Activated CD4-positive, alpha-beta T cell treated with anti-CD3 and anti-CD28 coated beads, Interleukin-2, amount 10 ng/mL, durations not matched to agents 24 days and 14 days (primary cell): ENCODE measurements at regions of chr16 and their contacts with region 1.

Region 1: DNA sequence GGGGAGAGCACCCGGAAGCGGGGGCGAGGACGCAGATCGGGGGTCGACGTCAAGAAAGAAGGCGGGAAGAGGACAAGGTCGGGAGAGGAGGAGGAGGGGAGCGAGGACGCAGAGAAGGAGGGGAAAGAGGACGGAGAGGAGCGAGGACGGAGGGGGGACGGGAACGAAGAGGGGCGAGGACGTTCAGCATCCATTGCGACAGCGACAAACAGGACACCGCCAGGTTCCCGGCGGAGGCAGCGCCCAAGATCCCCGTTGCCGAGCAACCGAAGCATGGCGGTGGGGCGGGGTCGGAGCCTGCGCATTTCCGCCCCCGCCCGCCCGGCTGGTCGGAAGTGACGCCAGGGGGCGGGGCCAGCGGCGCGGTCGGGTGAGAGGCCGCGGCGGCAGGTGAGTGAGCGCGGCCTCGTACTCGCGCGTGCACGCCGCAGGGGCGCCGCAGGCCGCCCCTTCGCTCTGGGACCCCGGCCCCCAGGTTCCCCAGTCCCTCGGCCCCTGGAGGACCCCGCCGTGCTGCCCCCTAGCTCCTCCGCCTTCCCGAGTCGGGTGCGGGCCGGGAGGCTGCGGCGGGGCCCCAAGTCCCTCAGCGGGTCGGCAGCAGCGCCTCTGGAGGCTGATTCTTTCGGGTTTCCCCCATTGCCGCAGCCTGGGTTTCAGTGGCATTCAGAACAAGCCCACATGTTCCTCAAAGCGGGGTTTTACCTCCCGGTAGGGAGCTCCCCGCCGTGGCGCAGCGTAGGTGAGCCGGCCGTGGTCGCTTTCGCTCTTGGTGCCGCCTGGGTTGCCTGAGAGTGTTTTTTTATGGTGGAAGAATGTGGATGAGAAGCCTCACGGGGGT is at the start of gene FAM234A:
- DNase-seq: peak; percentile 98
- H3K4me3 Mint-ChIP-seq: peak within 1 kb of the TSS; percentile 99
- H3K27ac Mint-ChIP-seq: peak within 1 kb of the TSS; percentile 99
- H3K4me1 Mint-ChIP-seq: peaks cover 18% of the 10 kb centered on the region
- H3K27me3 Mint-ChIP-seq: peaks cover under 1% of the 10 kb centered on the region
- total RNA-seq, gene FAM234A: 17.3 and 18.6 TPM in 2 replicates

Region 2: DNA sequence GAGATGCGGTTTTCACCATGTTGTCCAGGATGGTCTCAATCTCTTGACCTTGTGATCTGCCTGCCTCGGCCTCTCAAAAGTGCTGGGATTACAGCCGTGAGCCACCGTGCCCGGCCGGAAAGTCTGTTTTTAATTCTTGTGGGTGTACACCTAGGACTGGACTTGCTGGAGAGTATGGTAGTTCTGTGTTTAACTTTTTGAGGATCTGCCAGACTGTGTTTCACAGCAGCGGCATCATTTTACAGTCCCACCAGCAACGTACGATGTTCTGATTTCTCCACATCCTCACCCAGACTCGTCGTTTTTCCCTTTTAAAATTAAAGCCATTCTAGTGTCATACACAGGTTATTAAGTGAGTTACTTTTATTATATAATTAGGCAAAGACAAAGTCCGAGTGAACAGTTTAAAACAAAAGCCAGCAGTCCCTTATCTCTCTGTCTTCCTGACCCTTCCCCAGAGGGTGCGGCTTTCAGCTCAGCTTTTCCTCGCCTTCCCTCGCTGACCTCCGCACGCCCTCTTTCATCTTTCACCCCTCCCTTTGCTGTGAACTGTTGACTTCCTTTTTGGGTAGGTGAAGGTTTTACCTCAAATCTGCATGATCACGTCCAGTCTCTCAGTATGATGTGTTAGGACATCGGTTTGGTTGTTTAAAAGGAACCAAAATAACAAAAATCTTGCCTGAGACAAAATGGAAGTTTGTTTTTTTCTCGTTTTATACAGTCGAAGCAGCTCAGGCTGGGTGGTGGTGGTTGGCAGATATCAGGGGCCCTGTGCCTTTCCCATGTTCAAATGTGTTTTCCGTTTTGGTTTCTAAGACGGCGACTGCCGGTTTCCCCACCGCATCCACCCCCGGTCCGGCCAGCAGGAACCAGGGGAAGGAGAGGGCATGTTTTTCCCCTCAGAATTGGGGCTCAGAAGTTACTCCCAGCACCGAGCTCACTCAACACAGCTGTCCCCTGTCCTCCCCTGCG is 18.0 kb after region 1 on chr16:
- intact Hi-C with region 1: loop called (anchors 1 kb)
- DNase-seq: peak; percentile 77
- H3K4me3 Mint-ChIP-seq: peak overlapping the region; percentile 83
- H3K27ac Mint-ChIP-seq: peak overlapping the region; percentile 92
- H3K4me1 Mint-ChIP-seq: peaks cover 23% of the 10 kb centered on the region
- H3K27me3 Mint-ChIP-seq: no peaks in the 10 kb centered on the region

Region 3: DNA sequence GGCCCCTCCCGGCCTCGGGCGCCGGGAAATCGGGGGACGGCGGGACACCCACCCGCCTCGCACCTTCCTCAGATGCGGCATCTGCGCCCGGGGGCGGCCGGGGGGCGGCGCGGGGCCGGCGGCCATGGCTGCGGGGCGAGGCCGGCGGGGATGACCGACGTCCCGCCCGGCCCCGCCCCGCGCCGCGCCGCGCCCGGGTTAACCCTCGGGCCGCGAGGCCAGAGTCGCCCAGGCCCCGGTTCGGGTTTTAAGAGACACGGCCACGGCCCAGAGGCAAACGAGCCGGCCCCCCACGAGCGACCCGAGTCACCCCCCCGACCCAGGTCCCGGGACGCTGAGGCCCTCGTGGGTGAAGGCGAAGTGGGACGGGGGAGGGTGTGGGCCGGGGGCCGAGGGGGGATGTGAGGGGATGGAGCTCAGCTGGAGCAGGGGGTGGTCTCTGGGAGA is 41.1 kb after region 1 on chr16 and contains the start of gene RGS11:
- intact Hi-C with region 1: loop called (anchors 2 kb)
- DNase-seq: no peak
- H3K4me3 Mint-ChIP-seq: peak within 1 kb of the TSS; percentile 58
- H3K27ac Mint-ChIP-seq: no peak within 1 kb of the TSS
- H3K4me1 Mint-ChIP-seq: peaks cover 3% of the 10 kb centered on the region
- H3K27me3 Mint-ChIP-seq: peaks cover 25% of the 10 kb centered on the region
- total RNA-seq, gene RGS11: 0.14 TPM in 1 of 2 replicates, not detected in the other